Right ventricle myocardium superior (tissue), 1 donor: ENCODE measurements at regions of chr17 and their contacts with region 1.

Region 1: DNA sequence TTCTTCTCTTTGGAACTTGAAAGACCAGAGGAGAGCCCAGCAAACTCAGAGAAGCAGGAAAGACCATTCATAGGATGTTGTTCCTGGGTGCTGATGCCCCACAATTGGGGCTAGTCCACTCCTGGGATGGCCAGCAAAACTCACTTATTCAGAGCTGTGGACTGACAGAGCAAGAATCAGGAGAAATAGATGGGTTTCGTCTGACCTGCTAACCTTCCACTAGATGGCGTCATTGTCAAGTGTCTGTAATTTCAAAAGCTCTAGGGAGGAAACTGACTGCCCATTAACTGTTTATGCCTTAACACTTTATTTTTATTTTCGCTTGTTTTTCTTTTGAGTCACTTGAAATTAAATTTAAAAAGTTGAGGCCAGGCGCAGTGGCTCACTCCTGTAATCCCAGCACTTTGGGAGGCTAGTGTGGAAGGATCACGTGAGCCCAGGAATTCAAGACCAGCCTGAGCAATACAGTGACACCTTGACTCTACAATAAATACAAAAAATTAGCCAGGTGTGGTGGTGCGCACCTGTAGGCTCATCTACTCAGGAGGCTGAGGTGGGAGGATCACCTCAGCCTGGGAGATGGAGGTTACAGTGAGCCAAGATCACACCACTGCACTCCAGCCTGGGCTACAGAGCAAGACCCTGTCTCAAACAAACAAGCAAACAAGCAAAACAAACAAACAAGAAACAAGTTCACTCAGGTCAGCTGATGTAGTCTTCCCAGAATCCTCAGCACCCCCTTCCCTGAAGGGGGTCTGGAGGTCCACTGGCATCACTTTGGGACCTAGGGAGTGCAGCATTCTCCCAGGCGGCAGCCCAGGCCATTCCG is 28.6 kb upstream of the MILR1 start:
- DNase-seq: no peak
- ATAC-seq: peak; percentile 85

Region 2: GRCh38 chr17:64320613-64321553 is 99.5 kb before region 1 on chr17:
- intact Hi-C with region 1: loop called (anchors 5 kb)
- DNase-seq: peak; percentile 57
- ATAC-seq: peak; percentile 76

Region 3: GRCh38 chr17:64488301-64488700 is 67.9 kb after region 1 on chr17:
- intact Hi-C with region 1: loop called (anchors 5 kb)
- DNase-seq: no peak
- ATAC-seq: no peak

Region 4: GRCh38 chr17:64648234-64648633 is 227.9 kb after region 1 on chr17:
- intact Hi-C with region 1: loop called (anchors 10 kb)
- DNase-seq: no peak
- ATAC-seq: no peak